ENCODE measurements at regions of chr11 and their contacts with region 1.

Region 1: GRCh38 chr11:19808076-19808911 is 95.7 kb downstream of the NAV2 start:
- DNase-seq: peak; percentile 31
- H3K4me3 ChIP-seq: no peak overlapping the region
- H3K27ac ChIP-seq: no peak overlapping the region
- H3K4me1 ChIP-seq: peaks cover 4% of the 10 kb centered on the region
- H3K27me3 ChIP-seq: no peaks in the 10 kb centered on the region
- CTCF ChIP-seq: no peak
- POLR2A ChIP-seq: no peak

Region 2: GRCh38 chr11:19566583-19567379 is 241.5 kb before region 1 on chr11:
- CTCF ChIA-PET with region 1: interaction called, 4 read pairs
- POLR2A ChIA-PET with region 1: no interaction called
- dilution Hi-C with region 1: no loop called
- intact Hi-C with region 1: loop called (anchors 2 kb)
- DNase-seq: no peak
- H3K4me3 ChIP-seq: no peak overlapping the region
- H3K27ac ChIP-seq: no peak overlapping the region
- H3K4me1 ChIP-seq: peaks cover 5% of the 10 kb centered on the region
- H3K27me3 ChIP-seq: no peaks in the 10 kb centered on the region
- CTCF ChIP-seq: no peak
- POLR2A ChIP-seq: no peak

Region 3: GRCh38 chr11:19868281-19868821 is 60.1 kb after region 1 on chr11:
- CTCF ChIA-PET with region 1: no interaction called
- POLR2A ChIA-PET with region 1: no interaction called
- dilution Hi-C with region 1: no loop called
- intact Hi-C with region 1: no loop called
- DNase-seq: peak; percentile 38
- H3K4me3 ChIP-seq: no peak overlapping the region
- H3K27ac ChIP-seq: no peak overlapping the region
- H3K4me1 ChIP-seq: peaks cover 34% of the 10 kb centered on the region
- H3K27me3 ChIP-seq: no peaks in the 10 kb centered on the region
- CTCF ChIP-seq: no peak
- POLR2A ChIP-seq: no peak